WTC11 (cell line): ENCODE measurements at regions of chr13 and their contacts with region 1.

Region 1: DNA sequence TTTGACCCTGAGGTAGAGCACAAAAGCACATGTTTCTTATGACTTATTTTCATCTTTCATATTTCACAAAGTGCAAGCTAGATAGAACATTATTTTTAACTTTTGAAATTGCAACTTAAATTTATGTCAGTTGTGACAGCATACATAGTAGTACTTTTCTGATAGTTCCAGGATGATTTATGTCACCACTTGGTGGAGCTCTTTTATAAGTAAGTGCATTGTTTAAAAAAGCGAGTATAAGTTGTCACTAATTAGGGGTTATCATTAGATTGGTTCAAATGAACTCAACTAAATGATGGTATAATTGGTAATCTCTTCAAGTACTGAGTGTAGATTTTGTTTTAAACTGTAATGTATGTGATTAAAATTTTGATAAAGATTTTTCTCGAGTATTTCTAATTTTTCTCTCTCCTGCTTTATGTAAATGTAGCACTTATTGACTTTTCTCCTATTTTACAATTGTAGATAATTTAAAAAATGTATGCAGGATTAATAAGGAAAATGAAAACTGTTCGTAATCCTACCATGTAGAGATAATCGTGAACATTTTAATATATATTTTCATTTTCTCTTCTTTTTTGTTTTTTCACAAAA is 31.1 kb downstream of the RB1 start:
- DNase-seq: no peak
- ATAC-seq: no peak; the same call in 1 of the 2 replicates
- H3K4me3 Mint-ChIP-seq: no peak overlapping the region
- H3K27ac Mint-ChIP-seq: no peak overlapping the region
- H3K4me1 Mint-ChIP-seq: no peaks in the 10 kb centered on the region
- H3K27me3 Mint-ChIP-seq: no peaks in the 10 kb centered on the region
- CTCF ChIP-seq: no peak

Region 2: GRCh38 chr13:48505012-48505411 is 170.4 kb after region 1 on chr13:
- CTCF ChIA-PET with region 1: interaction called, 11 read pairs
- POLR2A ChIA-PET with region 1: no interaction called
- DNase-seq: no peak
- ATAC-seq: peak; percentile 73
- H3K4me3 Mint-ChIP-seq: no peak overlapping the region
- H3K27ac Mint-ChIP-seq: peak overlapping the region; percentile 64
- H3K4me1 Mint-ChIP-seq: peaks cover 18% of the 10 kb centered on the region
- H3K27me3 Mint-ChIP-seq: no peaks in the 10 kb centered on the region
- CTCF ChIP-seq: no peak